K562 (cell line): ENCODE measurements at regions of chr3 and their contacts with region 1.

Region 1: GRCh38 chr3:40240921-40241320 is 68.6 kb upstream of the EIF1B start:
- DNase-seq: peak in 2 of 4 experiments; percentile 21 to 29
- ATAC-seq: peak; percentile 94
- H3K4me3 ChIP-seq: no peak overlapping the region
- H3K27ac ChIP-seq: no peak overlapping the region
- H3K4me1 ChIP-seq: no peaks in the 10 kb centered on the region
- H3K27me3 ChIP-seq: peaks cover 10 to 14% of the 10 kb centered on the region in 2 experiments; a peak in 3 of 5 replicates
- CTCF ChIP-seq: peak; percentile 28 to 58 (median 32); a peak in 4 of 6 replicates
- EP300 ChIP-seq: no peak
- POLR2A ChIP-seq: no peak
- RAD21 ChIP-seq: peak; percentile 20 to 49; a peak in 2 of 4 replicates

Region 2: GRCh38 chr3:40211579-40211978 is 29.3 kb before region 1 on chr3:
- CTCF ChIA-PET with region 1: no interaction called
- POLR2A ChIA-PET with region 1: no interaction called
- in situ Hi-C with region 1: no loop called
- intact Hi-C with region 1: no loop called
- DNase-seq: no peak
- ATAC-seq: no peak
- H3K4me3 ChIP-seq: no peak overlapping the region
- H3K27ac ChIP-seq: no peak overlapping the region
- H3K4me1 ChIP-seq: no peaks in the 10 kb centered on the region; a peak in 1 of 5 replicates
- H3K27me3 ChIP-seq: peaks cover 0 to 14% of the 10 kb centered on the region in 2 experiments; a peak in 3 of 5 replicates
- CTCF ChIP-seq: no peak
- EP300 ChIP-seq: no peak
- POLR2A ChIP-seq: no peak
- RAD21 ChIP-seq: no peak

Region 3: GRCh38 chr3:40254891-40255290 is 14.0 kb after region 1 on chr3:
- CTCF ChIA-PET with region 1: no interaction called
- POLR2A ChIA-PET with region 1: no interaction called
- in situ Hi-C with region 1: no loop called
- intact Hi-C with region 1: no loop called
- DNase-seq: no peak
- ATAC-seq: no peak
- H3K4me3 ChIP-seq: no peak overlapping the region
- H3K27ac ChIP-seq: no peak overlapping the region
- H3K4me1 ChIP-seq: no peaks in the 10 kb centered on the region; a peak in 2 of 5 replicates
- H3K27me3 ChIP-seq: 0 out of 5 replicates have a peak, but pooled peaks cover 0 to 3% of the 10 kb centered on the region in 2 experiments
- CTCF ChIP-seq: no peak
- EP300 ChIP-seq: no peak
- POLR2A ChIP-seq: no peak
- RAD21 ChIP-seq: no peak

Region 4: DNA sequence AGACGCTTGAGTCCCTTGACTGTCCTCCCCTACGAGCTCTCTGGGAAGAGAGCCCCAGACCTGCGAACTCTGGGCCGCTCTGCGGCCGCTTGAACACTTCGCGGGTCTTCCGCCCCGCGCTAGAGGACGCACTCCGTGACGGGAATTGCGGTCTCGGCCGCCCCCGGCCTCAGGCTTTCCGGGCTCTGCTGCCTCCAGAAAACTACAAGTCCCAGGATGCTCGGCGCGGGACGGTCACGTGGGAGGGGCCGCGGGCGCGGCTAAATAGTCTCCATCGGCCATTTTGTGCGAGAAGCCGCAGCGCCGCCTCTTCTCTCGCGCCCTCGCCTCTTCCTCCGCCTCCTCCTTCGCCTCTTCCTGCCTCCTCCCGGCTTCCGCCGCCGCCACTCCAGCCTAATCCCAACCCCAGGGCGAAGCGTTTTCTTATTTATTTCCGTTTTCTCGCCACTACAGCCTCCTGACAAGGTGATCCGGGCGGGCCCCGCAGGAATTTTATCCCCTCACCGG is 68.5 kb after region 1 on chr3 and contains the start of gene EIF1B:
- CTCF ChIA-PET with region 1: interaction called, 4 read pairs
- POLR2A ChIA-PET with region 1: interaction called, 3 read pairs
- in situ Hi-C with region 1: no loop called
- intact Hi-C with region 1: loop called (anchors 5 kb)
- DNase-seq: peak; percentile 97 to 100 (median 98)
- ATAC-seq: peak; percentile 88
- H3K4me3 ChIP-seq: peak within 1 kb of the TSS; percentile 91
- H3K27ac ChIP-seq: peak within 1 kb of the TSS; percentile 96
- H3K4me1 ChIP-seq: peaks cover 8 to 38% of the 10 kb centered on the region in 2 experiments
- H3K27me3 ChIP-seq: no peaks in the 10 kb centered on the region
- CTCF ChIP-seq: peak; percentile 95 to 98 (median 96)
- EP300 ChIP-seq: peak; percentile 64
- POLR2A ChIP-seq: peak; percentile 95
- RAD21 ChIP-seq: peak; percentile 64 to 74
- polyA plus RNA-seq, gene EIF1B: 178 to 184 TPM

Region 5: GRCh38 chr3:40452876-40453730 is 212.2 kb after region 1 on chr3:
- CTCF ChIA-PET with region 1: no interaction called
- POLR2A ChIA-PET with region 1: no interaction called
- in situ Hi-C with region 1: no loop called
- intact Hi-C with region 1: no loop called
- DNase-seq: peak; percentile 99 to 100 (median 99)
- ATAC-seq: peak; percentile 95
- H3K4me3 ChIP-seq: peak overlapping the region; percentile 57
- H3K27ac ChIP-seq: peak overlapping the region; percentile 86
- H3K4me1 ChIP-seq: peaks cover 8 to 13% of the 10 kb centered on the region in 2 experiments; a peak in 4 of 5 replicates
- H3K27me3 ChIP-seq: no peaks in the 10 kb centered on the region
- CTCF ChIP-seq: peak in 2 of 3 experiments; percentile 9 to 33; a peak in 2 of 6 replicates
- EP300 ChIP-seq: no peak; the same call in 1 of the 2 replicates
- POLR2A ChIP-seq: peak; percentile 95
- RAD21 ChIP-seq: peak; percentile 39 to 55